Adrenal gland (tissue), 19 donors: ENCODE measurements at regions of chr10 and their contacts with region 1.

Region 1: DNA sequence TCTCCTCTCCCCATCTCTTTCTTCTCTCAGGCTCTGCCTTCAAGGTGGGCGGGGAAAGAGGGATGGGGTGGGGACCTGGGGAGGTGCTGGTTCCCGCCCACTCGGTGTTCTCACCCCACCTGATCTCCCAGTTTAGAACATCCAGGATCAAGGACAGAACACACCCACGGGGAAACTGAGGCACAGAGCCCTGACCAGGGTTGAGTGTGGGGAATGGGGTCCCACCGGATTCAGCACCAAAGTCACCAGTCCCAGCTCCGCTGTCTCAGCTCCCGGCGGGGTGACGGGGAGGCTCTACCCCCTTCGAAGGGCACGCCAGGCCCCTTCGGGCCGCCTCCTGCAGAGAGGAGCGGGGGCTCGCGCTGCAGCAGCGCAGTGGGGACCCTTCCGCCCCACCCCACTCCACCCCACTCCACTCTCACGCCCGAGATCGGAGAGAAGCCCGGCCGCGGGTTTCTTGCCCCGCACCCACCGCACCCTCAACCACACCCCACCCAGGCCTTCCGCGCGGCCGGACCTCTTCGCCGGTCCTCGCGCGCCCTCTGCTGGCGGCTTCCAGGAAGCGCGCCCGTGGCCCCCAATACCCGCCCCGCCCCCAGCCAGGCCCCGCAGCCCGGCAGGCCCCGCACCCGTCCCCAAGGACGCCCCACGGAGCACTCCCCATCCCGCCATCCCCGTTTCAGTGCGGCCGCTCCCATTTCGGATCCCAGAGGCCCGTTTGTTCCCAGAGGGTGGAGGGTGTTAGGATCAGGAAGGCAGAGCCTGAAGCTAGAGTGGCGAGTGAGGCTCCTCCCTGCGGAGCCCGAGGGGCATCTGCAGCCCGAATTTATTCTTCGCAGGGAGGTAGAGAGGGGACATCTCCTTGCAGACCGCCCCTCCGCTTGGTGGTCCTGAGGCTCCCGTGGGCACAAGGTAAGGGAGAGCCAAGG is 18.0 kb downstream of the POLL start:
- DNase-seq: peak; percentile 55 to 82 (median 80)
- H3K4me3 ChIP-seq: peak overlapping the region in 3 of 4 donors; percentile 2 to 55 (median 40)
- H3K27ac ChIP-seq: no peak overlapping the region
- H3K4me1 ChIP-seq: peaks cover 17 to 23% of the 10 kb centered on the region in 2 donors
- H3K27me3 ChIP-seq: peaks cover 2% of the 10 kb centered on the region
- CTCF ChIP-seq: peak; percentile 65 to 91 (median 80)
- POLR2A ChIP-seq: no peak

Region 2: DNA sequence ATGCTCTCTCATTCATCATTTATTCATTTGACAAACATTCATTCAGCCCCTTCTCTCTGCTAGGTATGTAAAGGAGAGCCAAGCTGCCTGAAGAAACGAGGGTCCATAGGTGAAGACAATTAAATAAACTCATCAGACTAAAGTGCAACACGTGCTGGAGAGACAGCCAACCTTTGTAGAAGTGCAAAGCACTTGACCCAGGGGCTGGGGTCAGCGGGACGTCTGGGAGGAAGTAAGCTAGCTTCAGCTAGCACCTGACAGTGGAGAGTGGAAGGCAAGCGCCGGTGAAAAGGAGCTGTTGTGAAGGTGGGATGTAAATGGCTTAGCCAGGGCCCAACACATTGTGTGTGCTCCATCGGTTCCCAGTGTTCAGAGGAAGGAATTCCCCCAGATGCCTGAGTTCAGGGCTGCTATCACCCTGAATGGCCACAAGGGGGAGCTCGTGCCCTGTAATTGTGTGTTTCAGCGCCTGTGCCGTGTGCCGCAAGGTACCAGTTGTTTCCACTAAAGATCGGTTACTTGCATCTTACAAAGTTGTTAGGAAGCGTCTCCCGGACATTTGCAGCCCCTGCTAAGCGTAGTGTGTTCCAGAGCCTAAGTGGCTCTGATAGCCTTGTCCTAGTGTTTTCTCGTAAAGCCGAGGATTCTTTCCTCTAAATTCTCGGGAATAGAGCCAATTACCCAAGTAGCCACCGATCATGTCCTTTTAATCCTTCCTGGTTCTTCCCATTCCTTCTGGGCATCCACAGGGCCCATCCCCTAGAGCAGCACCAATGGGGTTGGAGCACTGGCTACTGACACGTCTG is 408.4 kb before region 1 on chr10:
- intact Hi-C with region 1: loop called in 1 of 2 experiments (anchors 10 kb)
- DNase-seq: peak; percentile 60 to 82 (median 73)
- H3K4me3 ChIP-seq: peak overlapping the region in 1 of 4 donors; percentile 42
- H3K27ac ChIP-seq: no peak overlapping the region
- H3K4me1 ChIP-seq: peaks cover 0 to 4% of the 10 kb centered on the region in 2 donors
- H3K27me3 ChIP-seq: peaks cover 21% of the 10 kb centered on the region
- CTCF ChIP-seq: peak; percentile 87 to 98 (median 91)
- POLR2A ChIP-seq: no peak

Region 3: GRCh38 chr10:101214446-101215396 is 355.4 kb before region 1 on chr10:
- intact Hi-C with region 1: loop called (anchors 2 to 5 kb)
- DNase-seq: peak; percentile 31 to 72 (median 62)
- H3K4me3 ChIP-seq: no peak overlapping the region
- H3K27ac ChIP-seq: no peak overlapping the region
- H3K4me1 ChIP-seq: peaks cover 7 to 27% of the 10 kb centered on the region in 2 donors
- H3K27me3 ChIP-seq: peaks cover 70% of the 10 kb centered on the region
- CTCF ChIP-seq: peak; percentile 54 to 84 (median 72)
- POLR2A ChIP-seq: no peak

Region 4: GRCh38 chr10:101297901-101298486 is 272.1 kb before region 1 on chr10:
- intact Hi-C with region 1: loop called (anchors 2 to 10 kb)
- DNase-seq: peak; percentile 43 to 82 (median 65)
- H3K4me3 ChIP-seq: no peak overlapping the region
- H3K27ac ChIP-seq: no peak overlapping the region
- H3K4me1 ChIP-seq: no peaks in the 10 kb centered on the region
- H3K27me3 ChIP-seq: no peaks in the 10 kb centered on the region
- CTCF ChIP-seq: peak; percentile 55 to 88 (median 72)
- POLR2A ChIP-seq: no peak

Region 5: GRCh38 chr10:101441541-101442455 is 128.3 kb before region 1 on chr10:
- intact Hi-C with region 1: loop called in 1 of 2 experiments (anchors 10 kb)
- DNase-seq: peak in 6 of 7 donors; percentile 19 to 62 (median 36)
- H3K4me3 ChIP-seq: no peak overlapping the region
- H3K27ac ChIP-seq: no peak overlapping the region
- H3K4me1 ChIP-seq: peaks cover 2 to 6% of the 10 kb centered on the region in 2 donors
- H3K27me3 ChIP-seq: no peaks in the 10 kb centered on the region
- CTCF ChIP-seq: peak; percentile 23 to 82 (median 56)
- POLR2A ChIP-seq: no peak

Region 6: DNA sequence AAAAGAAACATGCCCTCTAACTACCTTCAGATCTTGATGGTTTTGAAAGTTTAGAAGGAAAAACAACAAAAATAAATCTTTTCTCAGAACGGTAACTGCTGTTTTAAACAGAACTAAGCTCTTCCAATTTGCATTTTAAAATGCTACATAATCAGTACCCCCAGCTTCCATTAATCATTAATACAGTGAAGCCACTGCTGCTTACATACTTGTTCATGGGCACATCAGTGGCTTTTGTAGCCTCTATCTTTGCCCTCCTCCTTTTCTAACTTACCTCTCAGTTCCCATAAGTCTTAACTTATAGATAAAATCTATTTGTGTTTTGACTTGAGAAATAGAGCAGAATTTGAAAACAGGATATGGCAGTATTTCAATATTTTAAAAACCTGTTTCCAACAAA is 91.1 kb before region 1 on chr10:
- intact Hi-C with region 1: loop called in 1 of 2 experiments (anchors 10 kb)
- DNase-seq: no peak
- H3K4me3 ChIP-seq: no peak overlapping the region
- H3K27ac ChIP-seq: no peak overlapping the region
- H3K4me1 ChIP-seq: no peaks in the 10 kb centered on the region
- H3K27me3 ChIP-seq: no peaks in the 10 kb centered on the region
- CTCF ChIP-seq: no peak
- POLR2A ChIP-seq: no peak